CD4-positive, alpha-beta T cell (primary cell): ENCODE measurements at regions of chr7 and their contacts with region 1.

Region 1: DNA sequence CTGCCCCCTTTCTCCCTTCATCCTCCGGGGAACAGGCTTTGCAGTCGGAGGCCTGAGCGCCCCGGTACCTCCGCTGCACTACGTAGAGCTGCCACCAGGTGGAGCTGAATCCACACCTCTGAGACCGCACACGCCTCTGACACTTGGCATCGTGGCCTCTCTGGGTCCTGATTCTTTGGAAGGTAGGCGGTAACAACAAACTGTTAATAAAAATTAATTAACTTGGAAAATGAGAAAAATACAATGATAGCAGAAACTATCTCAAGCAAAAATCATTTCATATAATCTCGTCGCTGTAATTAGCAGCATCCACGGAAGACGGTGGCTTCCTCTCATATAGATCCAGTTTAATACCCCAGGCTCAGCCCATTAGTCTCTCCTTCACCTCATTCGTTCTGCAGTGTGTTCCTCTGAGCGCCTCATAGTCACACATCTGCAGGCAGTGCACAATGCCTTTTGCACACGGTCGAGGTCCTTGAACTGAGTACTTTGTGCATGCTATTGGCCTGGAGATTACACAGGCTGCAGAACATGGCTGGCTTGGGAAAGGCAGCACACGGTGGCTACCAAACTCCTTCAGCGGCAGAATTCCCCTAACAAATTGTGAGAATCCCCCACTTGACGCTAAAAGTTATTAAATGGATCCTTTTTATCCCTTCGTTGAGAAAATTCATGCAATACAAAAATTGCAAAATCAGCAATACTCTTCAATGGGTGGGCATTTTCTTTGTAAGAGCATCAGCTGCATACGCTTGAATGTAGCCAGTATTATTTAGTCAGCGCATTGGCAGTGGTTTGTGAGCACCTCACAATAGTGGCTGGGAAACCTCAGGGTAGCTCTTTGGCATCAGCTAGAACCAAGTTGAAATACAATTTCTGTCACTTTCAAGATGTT is 18.7 kb downstream of the OR9A2 start:
- DNase-seq: peak; percentile 66 to 91 (median 80)
- ATAC-seq: peak; percentile 96
- H3K4me3 ChIP-seq: no peak overlapping the region
- H3K4me3 Mint-ChIP-seq: no peak overlapping the region
- H3K27ac ChIP-seq: no peak overlapping the region
- H3K27ac Mint-ChIP-seq: no peak overlapping the region
- H3K4me1 ChIP-seq: peaks cover 1% of the 10 kb centered on the region
- H3K4me1 Mint-ChIP-seq: peaks cover 3% of the 10 kb centered on the region
- H3K27me3 ChIP-seq: no peaks in the 10 kb centered on the region
- H3K27me3 Mint-ChIP-seq: peaks cover 4% of the 10 kb centered on the region
- CTCF ChIP-seq: peak; percentile 93

Region 2: GRCh38 chr7:142301923-142302550 is 706.2 kb before region 1 on chr7:
- CTCF ChIA-PET with region 1: interaction called, 4 read pairs
- POLR2A ChIA-PET with region 1: no interaction called
- intact Hi-C with region 1: loop called (anchors 5 kb)
- DNase-seq: peak in 3 of 14 experiments; percentile 29 to 38 (median 33)
- ATAC-seq: no peak
- H3K4me3 ChIP-seq: no peak overlapping the region
- H3K4me3 Mint-ChIP-seq: no peak overlapping the region
- H3K27ac ChIP-seq: no peak overlapping the region
- H3K27ac Mint-ChIP-seq: no peak overlapping the region
- H3K4me1 ChIP-seq: peaks cover 12% of the 10 kb centered on the region
- H3K4me1 Mint-ChIP-seq: peaks cover 40% of the 10 kb centered on the region
- H3K27me3 ChIP-seq: no peaks in the 10 kb centered on the region
- H3K27me3 Mint-ChIP-seq: peaks cover 24% of the 10 kb centered on the region
- CTCF ChIP-seq: peak; percentile 16

Region 3: DNA sequence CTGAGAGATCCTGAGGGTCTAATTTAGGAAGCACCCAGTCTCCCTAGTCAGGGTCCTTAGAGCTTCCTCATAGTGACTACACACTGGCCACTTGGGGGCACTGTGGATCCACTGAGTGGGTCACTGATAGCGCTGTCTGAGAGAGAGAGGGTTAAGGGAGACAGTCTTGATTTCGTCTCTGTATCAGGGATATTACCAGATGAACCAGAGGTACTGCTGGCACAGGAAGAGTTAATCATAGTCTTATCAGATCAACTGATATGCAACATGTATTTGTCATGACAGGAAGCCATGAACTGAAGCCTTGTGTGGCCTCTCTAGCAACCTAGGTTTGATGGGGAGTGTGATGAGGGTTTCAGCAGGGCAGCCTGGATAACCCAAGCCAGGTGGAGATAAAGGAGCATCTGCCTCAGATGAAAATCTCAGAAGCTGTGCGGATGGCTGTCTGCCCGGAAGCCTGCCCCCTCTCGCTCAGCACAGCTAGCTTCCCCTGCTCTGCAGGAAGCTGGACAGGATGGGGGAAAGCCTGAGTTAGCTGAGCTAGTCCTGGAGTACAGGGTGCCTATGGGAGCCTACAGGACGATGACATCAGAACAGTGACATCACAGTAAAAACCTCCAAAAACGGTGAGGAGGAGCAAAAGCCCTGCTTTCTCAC is 473.0 kb before region 1 on chr7:
- CTCF ChIA-PET with region 1: interaction called, 7 read pairs
- POLR2A ChIA-PET with region 1: no interaction called
- intact Hi-C with region 1: loop called (anchors 2 to 10 kb)
- DNase-seq: peak; percentile 35 to 86 (median 66)
- ATAC-seq: peak; percentile 82
- H3K4me3 ChIP-seq: peak overlapping the region; percentile 15
- H3K4me3 Mint-ChIP-seq: peak overlapping the region; percentile 75
- H3K27ac ChIP-seq: peak overlapping the region; percentile 8 to 57
- H3K27ac Mint-ChIP-seq: peak overlapping the region; percentile 77
- H3K4me1 ChIP-seq: peaks cover 19% of the 10 kb centered on the region
- H3K4me1 Mint-ChIP-seq: peaks cover 41% of the 10 kb centered on the region
- H3K27me3 ChIP-seq: no peaks in the 10 kb centered on the region
- H3K27me3 Mint-ChIP-seq: no peaks in the 10 kb centered on the region
- CTCF ChIP-seq: peak; percentile 64

Region 4: GRCh38 chr7:142669074-142669654 is 339.1 kb before region 1 on chr7:
- CTCF ChIA-PET with region 1: no interaction called
- POLR2A ChIA-PET with region 1: no interaction called
- intact Hi-C with region 1: loop called in 1 of 2 experiments (anchors 10 kb)
- DNase-seq: peak in 3 of 14 experiments; percentile 40 to 52 (median 51)
- ATAC-seq: no peak
- H3K4me3 ChIP-seq: no peak overlapping the region
- H3K4me3 Mint-ChIP-seq: no peak overlapping the region
- H3K27ac ChIP-seq: no peak overlapping the region
- H3K27ac Mint-ChIP-seq: peak overlapping the region; percentile 84
- H3K4me1 ChIP-seq: peaks cover 9% of the 10 kb centered on the region
- H3K4me1 Mint-ChIP-seq: peaks cover 35% of the 10 kb centered on the region
- H3K27me3 ChIP-seq: no peaks in the 10 kb centered on the region
- H3K27me3 Mint-ChIP-seq: no peaks in the 10 kb centered on the region
- CTCF ChIP-seq: peak; percentile 43

Region 5: DNA sequence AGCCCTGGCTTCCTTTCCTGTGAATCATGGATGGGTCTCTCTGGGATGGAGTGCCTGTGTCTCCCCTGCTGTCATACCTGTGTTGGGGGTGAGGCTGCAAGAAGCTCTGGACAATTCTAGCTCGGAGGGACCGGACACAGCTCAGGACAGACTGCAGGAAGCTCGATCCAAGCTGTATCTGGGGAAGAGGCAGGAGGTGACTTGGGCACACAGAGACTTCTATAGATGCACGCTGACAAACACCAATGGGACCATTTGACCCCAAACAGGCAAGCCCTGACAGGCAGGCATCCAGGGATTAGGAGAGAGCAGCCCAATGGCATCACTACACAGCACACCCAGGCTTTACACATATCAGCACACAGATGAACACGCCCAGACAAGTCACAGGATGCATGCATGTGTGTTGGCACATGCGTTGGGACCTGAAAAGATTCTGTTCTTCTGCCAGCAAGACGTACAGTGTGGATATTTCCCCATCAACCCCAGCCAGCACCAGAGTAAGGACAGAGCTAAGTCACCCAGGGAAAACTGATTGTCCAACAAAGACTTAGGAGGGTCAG is 64.5 kb before region 1 on chr7:
- CTCF ChIA-PET with region 1: no interaction called
- POLR2A ChIA-PET with region 1: no interaction called
- intact Hi-C with region 1: no loop called
- DNase-seq: no peak
- ATAC-seq: no peak
- H3K4me3 ChIP-seq: no peak overlapping the region
- H3K4me3 Mint-ChIP-seq: no peak overlapping the region
- H3K27ac ChIP-seq: no peak overlapping the region
- H3K27ac Mint-ChIP-seq: no peak overlapping the region
- H3K4me1 ChIP-seq: no peaks in the 10 kb centered on the region
- H3K4me1 Mint-ChIP-seq: no peaks in the 10 kb centered on the region
- H3K27me3 ChIP-seq: peaks cover 0 to 3% of the 10 kb centered on the region in 2 experiments
- H3K27me3 Mint-ChIP-seq: peaks cover 27% of the 10 kb centered on the region
- CTCF ChIP-seq: no peak

Region 6: DNA sequence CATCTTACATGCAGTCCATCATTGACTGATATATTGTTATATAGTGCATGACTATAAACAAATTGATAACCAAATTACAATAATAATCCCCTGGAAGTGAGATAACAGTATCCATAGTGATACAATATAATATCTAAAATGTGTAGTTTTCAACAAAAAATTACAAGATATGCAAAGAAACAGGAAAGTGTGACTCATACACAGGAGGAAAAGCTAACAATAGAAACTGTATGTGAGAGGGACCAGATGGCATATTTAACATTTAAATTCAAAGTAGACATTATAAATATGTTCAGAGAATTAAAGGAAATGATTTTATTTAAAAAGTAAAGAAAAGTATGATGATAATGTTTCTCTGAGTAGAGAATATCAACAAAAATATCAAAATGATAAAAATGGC is 10.7 kb after region 1 on chr7:
- CTCF ChIA-PET with region 1: interaction called, 13 read pairs
- POLR2A ChIA-PET with region 1: no interaction called
- intact Hi-C with region 1: no loop called
- DNase-seq: no peak
- ATAC-seq: no peak
- H3K4me3 ChIP-seq: no peak overlapping the region
- H3K4me3 Mint-ChIP-seq: no peak overlapping the region
- H3K27ac ChIP-seq: no peak overlapping the region
- H3K27ac Mint-ChIP-seq: no peak overlapping the region
- H3K4me1 ChIP-seq: no peaks in the 10 kb centered on the region
- H3K4me1 Mint-ChIP-seq: no peaks in the 10 kb centered on the region
- H3K27me3 ChIP-seq: peaks cover 0 to 12% of the 10 kb centered on the region in 2 experiments
- H3K27me3 Mint-ChIP-seq: peaks cover 16% of the 10 kb centered on the region
- CTCF ChIP-seq: no peak

Region 7: GRCh38 chr7:143416565-143417149 is 408.4 kb after region 1 on chr7:
- CTCF ChIA-PET with region 1: no interaction called
- POLR2A ChIA-PET with region 1: no interaction called
- intact Hi-C with region 1: loop called in 1 of 2 experiments (anchors 5 kb)
- DNase-seq: peak in 4 of 14 experiments; percentile 20 to 75 (median 68)
- ATAC-seq: no peak
- H3K4me3 ChIP-seq: no peak overlapping the region
- H3K4me3 Mint-ChIP-seq: no peak overlapping the region
- H3K27ac ChIP-seq: no peak overlapping the region
- H3K27ac Mint-ChIP-seq: no peak overlapping the region
- H3K4me1 ChIP-seq: no peaks in the 10 kb centered on the region
- H3K4me1 Mint-ChIP-seq: peaks cover 46% of the 10 kb centered on the region
- H3K27me3 ChIP-seq: no peaks in the 10 kb centered on the region
- H3K27me3 Mint-ChIP-seq: no peaks in the 10 kb centered on the region
- CTCF ChIP-seq: peak; percentile 82